Activated CD4-positive, alpha-beta T cell treated with anti-CD3 and anti-CD28 coated beads, Interleukin-2, amount 10 ng/mL, durations not matched to agents 24 days and 14 days (primary cell): ENCODE measurements at regions of chr3 and their contacts with region 1.

Region 1: DNA sequence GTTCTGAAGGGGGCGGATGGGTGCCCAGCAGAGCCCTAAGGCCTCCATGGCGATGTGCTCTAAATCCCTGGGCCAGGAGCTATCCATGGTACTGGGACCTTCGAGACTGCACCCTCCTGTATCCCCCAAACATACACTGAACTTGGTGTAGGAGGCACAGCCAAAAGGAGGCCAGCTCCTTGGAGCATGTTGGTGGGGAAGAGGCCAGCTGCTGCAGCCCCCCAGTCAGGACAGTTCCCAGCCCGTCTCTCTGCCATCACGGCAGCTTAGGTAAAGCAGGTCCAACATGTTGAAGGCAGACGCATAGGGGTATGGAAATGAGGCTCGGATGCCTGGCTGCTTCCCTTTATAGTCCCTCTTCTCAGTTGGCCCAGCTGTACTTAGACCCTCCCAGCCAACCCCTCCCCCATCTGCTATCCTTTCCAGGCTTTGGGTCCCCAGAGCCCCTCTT is 1.8 kb downstream of the CAMKV start:
- DNase-seq: peak; percentile 76
- H3K4me3 Mint-ChIP-seq: peak overlapping the region; percentile 17
- H3K27ac Mint-ChIP-seq: no peak overlapping the region
- H3K4me1 Mint-ChIP-seq: no peaks in the 10 kb centered on the region
- H3K27me3 Mint-ChIP-seq: peaks cover 53% of the 10 kb centered on the region

Region 2: GRCh38 chr3:49906004-49906743 is 38.3 kb after region 1 on chr3:
- intact Hi-C with region 1: loop called (anchors 2 kb)
- DNase-seq: peak; percentile 85
- H3K4me3 Mint-ChIP-seq: peak overlapping the region; percentile 73
- H3K27ac Mint-ChIP-seq: peak overlapping the region; percentile 80
- H3K4me1 Mint-ChIP-seq: peaks cover 30% of the 10 kb centered on the region
- H3K27me3 Mint-ChIP-seq: no peaks in the 10 kb centered on the region

Region 3: GRCh38 chr3:49966230-49966942 is 98.5 kb after region 1 on chr3:
- intact Hi-C with region 1: no loop called
- DNase-seq: no peak
- H3K4me3 Mint-ChIP-seq: no peak overlapping the region
- H3K27ac Mint-ChIP-seq: no peak overlapping the region
- H3K4me1 Mint-ChIP-seq: no peaks in the 10 kb centered on the region
- H3K27me3 Mint-ChIP-seq: no peaks in the 10 kb centered on the region

Region 4: DNA sequence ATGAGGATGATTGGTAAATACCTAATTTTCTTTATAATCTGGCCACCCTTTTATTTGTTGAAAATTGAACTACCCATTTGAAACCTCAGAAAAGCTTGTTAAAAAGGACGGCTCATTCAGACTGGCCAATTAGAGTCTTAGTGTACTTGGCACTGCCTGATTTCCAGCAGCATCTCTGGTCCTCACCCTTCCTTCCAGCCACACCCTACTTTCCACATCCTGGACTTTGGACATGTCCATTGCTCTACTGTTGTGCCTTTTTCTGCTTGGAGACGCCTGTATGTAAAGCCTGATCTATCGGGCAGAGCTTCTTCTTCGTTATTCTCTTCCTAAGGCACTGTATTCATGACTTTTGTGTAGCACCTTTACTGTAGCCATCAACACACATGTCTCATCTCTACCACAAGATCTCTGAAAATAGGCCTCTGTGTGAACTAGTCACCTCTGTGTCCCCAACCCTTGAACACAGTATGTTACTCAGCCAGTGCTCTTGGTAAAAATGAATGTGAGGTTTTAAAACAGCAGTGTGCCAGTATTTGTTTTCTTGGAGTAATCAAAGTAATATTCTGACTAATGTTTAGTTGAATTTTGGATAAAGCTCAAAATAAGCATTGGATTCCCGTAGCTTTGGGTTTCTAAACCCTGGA is 227.6 kb after region 1 on chr3:
- intact Hi-C with region 1: no loop called
- DNase-seq: no peak
- H3K4me3 Mint-ChIP-seq: no peak overlapping the region
- H3K27ac Mint-ChIP-seq: peak overlapping the region; percentile 11
- H3K4me1 Mint-ChIP-seq: peaks cover 23% of the 10 kb centered on the region
- H3K27me3 Mint-ChIP-seq: no peaks in the 10 kb centered on the region